Endothelial cell of umbilical vein (primary cell): ENCODE measurements at regions of chr3 and their contacts with region 1.

Region 1: DNA sequence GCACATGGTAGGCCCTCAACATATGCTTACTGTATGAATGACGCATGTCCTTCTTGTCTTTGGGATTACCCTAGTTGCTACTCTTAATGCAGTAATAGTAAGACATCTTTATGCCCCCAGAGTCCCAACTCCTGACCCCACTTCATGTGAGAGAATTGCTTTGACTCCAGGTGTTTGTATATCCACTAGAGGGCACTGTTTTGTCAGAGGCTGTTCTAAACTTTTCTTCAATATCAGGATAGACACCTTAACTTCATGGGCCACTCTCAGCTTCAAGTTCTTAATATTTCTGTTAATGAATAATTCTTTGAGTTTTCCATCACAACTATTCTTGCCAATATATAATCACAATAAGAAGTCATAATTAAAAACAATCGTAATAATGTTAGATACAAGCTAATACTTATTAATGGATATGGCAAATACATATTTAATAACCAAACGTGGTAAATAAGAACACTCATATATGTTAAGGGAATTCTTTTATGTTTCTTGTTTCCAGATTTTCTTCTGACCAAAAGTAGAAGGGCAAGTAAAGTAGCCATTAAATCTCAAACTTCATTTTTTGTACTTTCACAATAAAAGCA is 337.2 kb upstream of the DNAJC19 start:
- DNase-seq: peak; percentile 54
- H3K4me3 ChIP-seq: no peak overlapping the region
- H3K27ac ChIP-seq: no peak overlapping the region
- H3K4me1 ChIP-seq: no peaks in the 10 kb centered on the region
- H3K27me3 ChIP-seq: no peaks in the 10 kb centered on the region
- CTCF ChIP-seq: peak; percentile 54 to 58
- POLR2A ChIP-seq: no peak

Region 2: DNA sequence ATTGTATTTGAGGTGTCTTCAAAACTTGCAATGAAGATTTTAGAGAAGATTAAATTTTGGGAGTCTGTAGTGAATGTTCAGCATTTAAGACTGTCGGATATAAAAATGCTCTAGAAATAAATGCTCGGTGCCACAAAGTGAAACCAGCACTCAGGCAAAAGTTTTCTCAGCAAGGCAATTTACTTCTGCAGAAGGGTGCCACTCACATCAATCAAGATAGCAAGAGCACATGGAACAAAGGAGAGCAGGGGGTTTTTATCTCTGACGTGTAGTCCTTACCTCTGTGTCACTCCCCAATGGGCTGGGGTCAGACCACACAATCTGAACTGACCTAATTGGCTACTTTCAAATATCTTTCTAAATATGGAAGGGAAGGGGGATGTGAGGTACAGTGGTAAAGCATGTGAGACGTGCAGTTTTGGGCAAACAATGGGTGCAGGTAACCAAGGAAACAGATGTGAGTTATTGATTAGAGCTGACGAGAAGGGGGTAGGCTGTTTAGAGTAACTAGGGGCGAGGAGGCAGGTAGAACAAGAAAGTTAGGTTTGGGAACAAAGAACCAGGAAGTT is 437.7 kb before region 1 on chr3:
- CTCF ChIA-PET with region 1: no interaction called
- POLR2A ChIA-PET with region 1: no interaction called
- dilution Hi-C with region 1: no loop called
- intact Hi-C with region 1: no loop called
- DNase-seq: no peak
- H3K4me3 ChIP-seq: no peak overlapping the region
- H3K27ac ChIP-seq: no peak overlapping the region
- H3K4me1 ChIP-seq: no peaks in the 10 kb centered on the region
- H3K27me3 ChIP-seq: no peaks in the 10 kb centered on the region
- CTCF ChIP-seq: no peak
- POLR2A ChIP-seq: no peak

Region 3: DNA sequence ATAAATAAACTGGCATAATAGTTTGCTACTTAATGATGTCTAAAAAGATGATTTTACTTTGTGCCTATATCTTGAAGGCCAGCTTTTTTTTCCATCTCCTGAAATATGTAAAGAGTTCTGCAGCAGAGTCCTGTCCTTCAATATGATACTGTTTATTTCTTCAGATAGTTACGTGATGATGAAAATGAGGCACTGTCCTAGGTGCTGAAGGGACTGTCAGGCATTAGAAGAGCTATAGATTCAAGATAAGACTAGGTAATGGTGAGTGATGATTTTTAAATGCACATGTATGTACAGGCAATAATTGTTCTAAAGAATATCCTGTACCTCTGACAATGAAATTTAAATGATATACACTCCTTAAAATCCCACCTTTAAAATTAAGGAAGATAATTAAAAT is 10.2 kb before region 1 on chr3:
- CTCF ChIA-PET with region 1: interaction called, 16 read pairs
- POLR2A ChIA-PET with region 1: no interaction called
- dilution Hi-C with region 1: no loop called
- intact Hi-C with region 1: no loop called
- DNase-seq: peak; percentile 41
- H3K4me3 ChIP-seq: no peak overlapping the region
- H3K27ac ChIP-seq: no peak overlapping the region
- H3K4me1 ChIP-seq: no peaks in the 10 kb centered on the region
- H3K27me3 ChIP-seq: no peaks in the 10 kb centered on the region
- CTCF ChIP-seq: no peak
- POLR2A ChIP-seq: no peak

Region 4: DNA sequence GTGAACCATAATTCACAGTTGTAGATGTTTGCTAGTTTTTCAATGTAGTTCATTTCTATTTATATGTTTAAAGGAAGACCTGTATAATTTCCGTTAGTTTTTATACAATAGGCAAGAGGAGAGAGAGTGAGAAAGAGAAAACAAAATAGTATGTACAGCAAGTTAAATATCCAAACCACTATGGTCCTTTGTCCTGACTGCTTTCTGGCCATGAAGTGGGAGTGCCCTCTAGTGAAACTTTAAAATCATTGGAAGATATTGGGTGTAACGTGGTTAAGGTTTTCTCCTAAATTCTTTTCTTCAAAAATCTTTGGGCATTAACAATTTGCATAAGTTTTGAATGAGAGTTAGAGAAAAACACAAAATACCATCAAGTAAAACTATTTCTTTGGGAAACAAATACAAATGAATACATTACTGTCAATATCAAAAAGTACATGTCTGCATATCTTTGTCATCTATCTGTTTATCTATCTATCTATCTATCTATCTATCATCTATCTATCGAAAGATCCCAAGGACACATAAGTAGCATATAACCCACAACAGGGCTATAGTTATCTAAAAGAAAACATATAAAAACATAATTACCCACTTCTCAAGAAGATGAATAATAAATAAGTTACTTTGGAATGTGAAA is 931.9 kb after region 1 on chr3:
- CTCF ChIA-PET with region 1: interaction called, 4 read pairs
- POLR2A ChIA-PET with region 1: no interaction called
- dilution Hi-C with region 1: no loop called
- intact Hi-C with region 1: loop called (anchors 1 kb)
- DNase-seq: peak; percentile 40
- H3K4me3 ChIP-seq: no peak overlapping the region
- H3K27ac ChIP-seq: no peak overlapping the region
- H3K4me1 ChIP-seq: no peaks in the 10 kb centered on the region
- H3K27me3 ChIP-seq: no peaks in the 10 kb centered on the region
- CTCF ChIP-seq: peak; percentile 22 to 37
- POLR2A ChIP-seq: no peak